PC-9 (cell line): ENCODE measurements at regions of chr4 and their contacts with region 1.

Region 1: DNA sequence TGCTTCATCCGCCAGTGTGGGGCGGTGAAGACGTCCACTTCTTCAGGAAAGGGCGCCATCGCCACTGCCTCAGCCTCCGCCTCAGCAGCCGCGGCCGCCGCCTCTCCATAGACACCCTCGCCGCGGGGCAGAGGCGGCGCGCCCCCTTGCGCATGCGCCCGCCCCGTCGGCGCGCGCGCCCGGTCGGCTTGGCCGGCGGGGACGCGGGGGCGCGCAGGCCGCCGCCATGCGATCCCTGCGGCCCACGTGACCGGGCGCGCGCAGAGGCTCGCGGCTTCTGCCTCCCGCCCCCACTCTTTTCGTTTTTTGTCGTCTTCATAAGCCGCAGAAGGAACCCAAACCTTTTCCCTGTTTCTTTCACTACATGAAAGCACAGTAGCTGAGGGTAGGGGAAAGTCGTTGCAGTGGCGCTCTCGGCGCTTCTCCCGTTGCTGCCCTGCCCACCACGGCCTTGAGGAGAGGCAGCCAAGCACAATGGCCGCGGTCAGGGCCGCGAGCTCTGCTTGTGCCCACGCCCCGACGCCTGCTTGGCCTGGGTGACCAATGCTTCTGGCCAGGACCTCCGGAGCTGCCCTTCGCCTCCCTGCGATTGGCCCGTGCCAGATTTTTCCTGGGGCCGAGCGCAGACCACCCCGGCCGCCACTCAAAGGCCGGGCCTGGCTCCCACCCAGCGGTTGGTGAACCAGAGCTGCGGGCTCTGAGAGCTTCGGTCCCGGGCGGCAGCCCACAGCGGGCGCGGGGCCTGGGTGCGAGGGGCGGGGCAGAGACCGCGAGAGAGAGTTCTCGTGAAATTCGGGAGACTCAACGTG is at the start of gene FBXL5:
- DNase-seq: peak; percentile 40 to 87
- H3K4me3 ChIP-seq: peak within 1 kb of the TSS; percentile 83
- H3K27ac ChIP-seq: peak within 1 kb of the TSS; percentile 80
- H3K4me1 ChIP-seq: peaks cover 34% of the 10 kb centered on the region
- H3K27me3 ChIP-seq: no peaks in the 10 kb centered on the region
- CTCF ChIP-seq: no peak
- total RNA-seq, gene FBXL5: 40.7 and 45.0 TPM in 2 replicates

Region 2: DNA sequence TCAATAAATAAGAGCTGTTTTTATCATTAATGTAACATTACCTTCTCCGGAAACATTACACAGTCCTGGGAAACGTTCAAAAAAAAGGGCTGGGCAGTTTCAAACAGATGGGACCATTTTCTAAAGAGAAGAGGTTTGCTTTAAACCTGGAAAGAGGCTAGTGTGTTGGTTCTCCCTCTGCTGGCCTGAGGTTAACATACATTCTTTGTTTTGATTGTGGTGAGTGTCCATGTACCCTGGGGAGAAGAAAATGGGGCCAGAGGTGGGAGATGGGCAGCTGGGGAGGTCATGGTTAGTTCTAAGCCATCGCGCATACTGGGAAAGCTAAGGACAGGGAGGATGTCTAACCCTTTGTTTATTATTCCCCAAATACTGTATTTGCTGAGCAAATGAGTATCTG is 458.4 kb before region 1 on chr4:
- CTCF ChIA-PET with region 1: no interaction called
- POLR2A ChIA-PET with region 1: no interaction called
- intact Hi-C with region 1: no loop called
- DNase-seq: peak in 1 of 2 experiments; percentile 8
- H3K4me3 ChIP-seq: no peak overlapping the region
- H3K27ac ChIP-seq: no peak overlapping the region
- H3K4me1 ChIP-seq: no peaks in the 10 kb centered on the region
- H3K27me3 ChIP-seq: no peaks in the 10 kb centered on the region
- CTCF ChIP-seq: peak; percentile 45

Region 3: DNA sequence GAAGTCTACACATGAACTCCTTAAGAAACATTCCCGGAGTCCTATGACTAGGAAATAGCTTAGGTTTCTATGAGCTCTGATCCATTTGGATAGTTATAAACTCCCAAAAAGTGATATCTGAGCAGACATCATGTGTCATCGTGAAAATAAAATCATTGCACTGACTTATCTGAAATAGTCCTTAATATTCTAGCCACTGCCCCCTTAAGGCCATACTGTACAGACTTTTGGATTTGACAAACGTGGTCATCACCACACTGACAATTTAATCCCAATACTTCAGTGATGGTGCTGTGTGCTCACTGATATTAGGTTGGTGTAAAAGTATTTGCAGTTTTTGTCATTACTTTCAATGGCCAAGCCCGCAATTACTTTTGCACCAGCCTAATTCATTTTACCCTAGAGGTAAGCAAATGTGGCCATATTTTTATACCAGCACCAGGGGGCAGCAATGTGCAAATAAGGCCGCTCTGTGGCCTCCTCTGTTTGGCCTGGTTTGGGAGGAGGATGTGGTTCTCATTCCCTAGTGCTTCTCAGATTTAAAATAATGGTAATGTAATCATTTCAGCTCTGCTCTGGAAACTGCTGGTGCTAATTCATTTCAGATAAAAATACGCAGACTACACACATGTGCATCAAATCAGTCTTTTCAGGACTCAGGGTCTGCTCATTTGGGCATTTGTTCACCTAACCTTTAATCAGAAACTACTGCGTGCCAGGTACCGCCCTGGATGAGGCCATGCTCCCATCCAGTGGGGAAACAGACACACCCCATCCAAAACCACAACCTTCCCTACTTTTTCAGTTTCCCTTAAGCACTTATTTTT is 424.0 kb before region 1 on chr4:
- CTCF ChIA-PET with region 1: interaction called, 13 read pairs
- POLR2A ChIA-PET with region 1: no interaction called
- intact Hi-C with region 1: loop called (anchors 10 kb)
- DNase-seq: peak in 1 of 2 experiments; percentile 61
- H3K4me3 ChIP-seq: no peak overlapping the region
- H3K27ac ChIP-seq: no peak overlapping the region
- H3K4me1 ChIP-seq: no peaks in the 10 kb centered on the region
- H3K27me3 ChIP-seq: no peaks in the 10 kb centered on the region
- CTCF ChIP-seq: peak; percentile 73

Region 4: DNA sequence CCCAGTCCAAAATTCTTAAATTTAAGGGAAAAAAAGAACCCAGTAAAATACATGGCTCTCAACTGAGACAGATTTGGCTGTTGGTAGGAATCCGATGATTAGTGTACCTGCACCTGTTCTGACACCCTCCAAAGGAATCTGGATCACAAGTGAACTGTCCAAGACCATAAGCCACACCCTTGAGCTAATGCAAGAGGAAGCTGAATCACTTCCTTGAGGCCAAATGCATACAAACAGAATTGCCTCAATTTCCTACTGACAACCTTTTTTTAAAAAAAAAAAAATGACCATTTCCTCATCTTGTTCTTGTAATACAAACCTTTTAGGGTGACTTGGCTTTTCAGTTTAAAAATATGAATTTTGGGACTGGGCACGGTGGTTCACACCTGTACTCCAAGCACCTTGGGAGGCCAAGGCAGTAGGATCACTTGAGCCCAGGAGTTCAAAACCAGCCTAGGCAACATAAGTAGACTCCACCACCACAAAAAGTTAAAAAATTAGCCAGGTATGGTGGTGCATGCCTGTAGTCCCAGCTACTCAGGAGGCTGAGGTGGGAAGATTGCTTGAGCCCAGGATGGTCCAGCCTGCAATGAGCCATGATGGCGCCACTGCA is 10.4 kb after region 1 on chr4:
- CTCF ChIA-PET with region 1: no interaction called
- POLR2A ChIA-PET with region 1: interaction called, 11 read pairs
- intact Hi-C with region 1: loop called (anchors 1 kb)
- DNase-seq: peak; percentile 41 to 97
- H3K4me3 ChIP-seq: no peak overlapping the region
- H3K27ac ChIP-seq: peak overlapping the region; percentile 96
- H3K4me1 ChIP-seq: peaks cover 19% of the 10 kb centered on the region
- H3K27me3 ChIP-seq: no peaks in the 10 kb centered on the region
- CTCF ChIP-seq: no peak

Region 5: DNA sequence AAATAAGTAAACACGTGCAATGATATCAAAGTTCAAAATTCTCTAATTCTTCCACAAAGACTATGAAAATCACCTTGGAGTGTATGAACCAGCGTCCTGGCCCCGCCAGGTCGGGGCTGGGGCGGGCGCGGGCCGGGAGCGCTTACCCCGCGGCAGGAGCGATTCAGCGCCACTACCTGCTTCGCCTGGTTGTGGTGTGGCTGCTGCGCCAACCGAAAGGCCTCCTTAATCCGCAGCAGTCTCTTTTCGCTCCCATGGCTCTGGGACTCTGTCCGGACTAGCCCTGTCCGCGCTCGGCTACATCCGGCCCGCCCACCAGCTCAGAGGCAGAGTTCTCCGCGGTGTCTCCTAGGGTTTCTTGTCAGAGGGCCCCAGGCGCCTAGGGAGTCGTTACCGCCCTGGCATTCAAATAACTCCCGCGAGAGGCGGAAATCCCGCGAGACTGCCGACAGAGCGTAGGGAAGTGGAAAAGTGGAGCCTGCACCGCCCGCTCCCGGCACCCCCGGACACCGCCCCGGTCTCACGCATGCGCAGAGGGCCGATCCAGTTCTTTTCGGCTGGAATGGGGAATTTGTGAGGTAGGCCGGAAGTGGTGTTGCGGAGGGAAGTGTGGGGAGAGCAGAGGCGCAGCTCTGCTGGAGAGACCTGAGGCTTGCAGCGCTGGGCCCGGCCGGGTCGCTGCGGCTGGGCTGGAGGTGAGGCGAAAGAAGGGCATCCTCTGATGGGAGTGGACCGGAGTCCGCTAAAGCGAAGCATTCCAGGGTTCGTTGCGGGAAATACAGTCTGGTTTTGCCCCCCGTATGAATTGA is 26.0 kb after region 1 on chr4 and contains the start of gene FAM200B:
- CTCF ChIA-PET with region 1: no interaction called
- POLR2A ChIA-PET with region 1: no interaction called
- intact Hi-C with region 1: loop called (anchors 1 kb)
- DNase-seq: peak; percentile 93 to 100
- H3K4me3 ChIP-seq: peak within 1 kb of the TSS; percentile 79
- H3K27ac ChIP-seq: peak within 1 kb of the TSS; percentile 87
- H3K4me1 ChIP-seq: peaks cover 47% of the 10 kb centered on the region
- H3K27me3 ChIP-seq: no peaks in the 10 kb centered on the region
- CTCF ChIP-seq: no peak
- total RNA-seq, gene FAM200B: 20.5 and 32.4 TPM in 2 replicates

Region 6: GRCh38 chr4:15778289-15779241 is 123.1 kb after region 1 on chr4 and contains the start of gene CD38:
- CTCF ChIA-PET with region 1: no interaction called
- POLR2A ChIA-PET with region 1: interaction called, 3 read pairs
- intact Hi-C with region 1: loop called (anchors 10 kb)
- DNase-seq: peak in 1 of 2 experiments; percentile 15
- H3K4me3 ChIP-seq: no peak within 1 kb of the TSS
- H3K27ac ChIP-seq: no peak within 1 kb of the TSS
- H3K4me1 ChIP-seq: peaks cover 11% of the 10 kb centered on the region
- H3K27me3 ChIP-seq: no peaks in the 10 kb centered on the region
- CTCF ChIP-seq: no peak
- total RNA-seq, gene CD38: 0.90 and 1.3 TPM in 2 replicates

Region 7: DNA sequence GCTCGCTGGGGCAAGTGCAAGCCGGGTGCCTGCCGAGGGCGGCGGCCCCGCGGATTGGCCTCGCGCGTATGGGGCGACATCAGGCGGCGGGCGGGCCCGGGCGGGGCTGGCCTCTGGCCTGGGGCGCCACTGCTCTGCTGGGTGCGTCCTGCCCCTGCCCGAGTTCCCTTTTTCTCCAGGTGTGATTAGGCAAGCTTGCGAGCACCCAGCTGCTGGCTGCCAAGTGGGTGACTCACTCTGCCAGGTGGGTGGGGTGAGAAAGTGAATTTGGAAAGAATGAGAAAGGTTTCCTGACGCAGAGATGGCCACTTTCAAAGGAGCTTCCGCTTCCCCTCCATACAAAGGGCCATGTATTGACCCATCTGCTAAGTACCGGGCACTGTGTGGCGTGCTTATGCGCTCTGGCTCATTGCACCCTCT is 250.6 kb after region 1 on chr4:
- CTCF ChIA-PET with region 1: no interaction called
- POLR2A ChIA-PET with region 1: no interaction called
- intact Hi-C with region 1: no loop called
- DNase-seq: peak; percentile 96 to 98
- H3K4me3 ChIP-seq: peak overlapping the region; percentile 46; the same call in 1 of the 2 replicates
- H3K27ac ChIP-seq: peak overlapping the region; percentile 94
- H3K4me1 ChIP-seq: peaks cover 43% of the 10 kb centered on the region
- H3K27me3 ChIP-seq: no peaks in the 10 kb centered on the region
- CTCF ChIP-seq: no peak

Region 8: DNA sequence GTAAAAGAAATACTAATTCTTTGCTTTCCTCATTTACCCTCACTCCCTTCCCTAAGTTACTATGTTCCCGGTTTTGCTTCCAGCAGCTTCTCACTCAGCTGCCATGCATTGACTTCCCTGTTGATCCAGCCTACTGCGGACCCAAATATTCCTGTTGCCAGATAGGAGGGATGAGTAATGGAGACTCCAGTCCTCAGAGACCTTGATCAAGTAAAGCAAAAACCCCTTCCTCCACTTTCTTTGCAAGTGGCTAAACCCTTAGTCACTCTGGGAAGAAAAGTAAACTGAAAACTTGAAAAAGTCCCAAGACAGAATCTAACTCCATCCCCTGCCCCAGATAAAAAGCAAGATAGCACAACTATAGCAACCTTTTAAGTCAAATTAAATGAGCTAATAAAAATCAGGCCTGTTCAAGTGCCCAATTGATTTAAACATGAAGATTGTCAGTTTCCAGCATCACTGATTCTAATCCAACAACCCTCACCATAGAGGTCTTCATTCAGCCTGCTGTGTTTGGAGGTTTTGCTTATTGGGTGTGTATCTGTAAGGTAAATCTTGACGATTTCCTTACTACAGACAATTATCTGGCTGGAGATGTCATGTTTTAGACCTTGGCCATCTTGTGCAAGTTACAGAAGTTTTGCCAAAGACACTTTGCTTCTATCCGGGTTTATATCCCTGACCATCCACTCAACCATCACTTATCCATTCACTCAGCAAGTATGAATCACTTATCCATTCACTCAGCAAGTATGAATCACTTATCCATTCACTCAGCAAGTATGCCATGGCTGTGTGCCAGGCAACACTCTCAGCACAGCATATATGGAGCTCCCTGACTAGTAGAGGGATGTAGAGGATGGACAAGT is 265.5 kb after region 1 on chr4:
- CTCF ChIA-PET with region 1: no interaction called
- POLR2A ChIA-PET with region 1: interaction called, 12 read pairs
- intact Hi-C with region 1: no loop called
- DNase-seq: peak; percentile 87 to 92
- H3K4me3 ChIP-seq: no peak overlapping the region
- H3K27ac ChIP-seq: peak overlapping the region; percentile 90
- H3K4me1 ChIP-seq: peaks cover 47% of the 10 kb centered on the region
- H3K27me3 ChIP-seq: no peaks in the 10 kb centered on the region
- CTCF ChIP-seq: no peak

Region 9: GRCh38 chr4:16001484-16001858 is 346.0 kb after region 1 on chr4:
- CTCF ChIA-PET with region 1: no interaction called
- POLR2A ChIA-PET with region 1: interaction called, 10 read pairs
- intact Hi-C with region 1: no loop called
- DNase-seq: peak; percentile 51 to 65
- H3K4me3 ChIP-seq: no peak overlapping the region
- H3K27ac ChIP-seq: no peak overlapping the region
- H3K4me1 ChIP-seq: no peaks in the 10 kb centered on the region
- H3K27me3 ChIP-seq: no peaks in the 10 kb centered on the region
- CTCF ChIP-seq: peak; percentile 86